HEK293 (cell line): ENCODE measurements at regions of chr19 and their contacts with region 1.

Region 1: DNA sequence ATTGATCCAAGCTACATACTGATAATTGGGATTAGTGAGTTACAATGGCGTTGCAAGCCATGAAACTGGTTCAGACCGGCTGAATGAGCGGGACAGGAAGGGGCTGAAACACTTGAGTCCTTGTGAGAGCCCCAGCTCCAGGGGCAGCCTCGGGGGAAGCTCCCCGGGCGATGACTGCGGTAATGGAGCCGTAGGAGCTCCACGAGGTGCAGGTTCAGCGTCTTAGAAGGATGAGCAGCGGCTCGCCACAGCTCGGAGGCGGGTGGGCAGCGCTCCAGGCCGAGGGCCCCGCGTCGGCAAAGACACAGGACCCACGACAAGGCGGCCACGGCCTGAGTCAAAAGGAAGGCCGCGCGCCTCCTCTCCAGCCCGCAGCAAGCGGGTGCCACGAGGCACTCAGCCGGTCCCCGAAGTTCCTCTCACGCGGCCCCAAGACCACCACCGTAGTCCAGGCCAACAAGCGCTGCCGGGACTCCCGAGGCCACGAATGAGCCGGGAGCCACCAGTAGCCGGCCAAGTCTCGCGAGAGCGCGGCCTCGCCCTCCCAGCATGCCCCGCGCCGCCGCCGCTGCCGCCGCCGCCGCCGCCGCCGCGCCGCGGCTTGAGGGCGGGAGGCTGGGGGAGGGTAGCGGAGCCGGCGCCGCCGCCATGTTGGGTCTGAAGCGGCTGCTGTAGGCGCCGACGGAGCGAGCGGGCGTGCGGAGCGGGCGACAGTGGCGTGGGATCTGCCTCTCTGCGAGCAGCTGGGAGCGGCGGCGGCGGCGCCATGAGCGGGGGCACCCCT is at the start of gene LSM14A:
- H3K4me3 ChIP-seq: peak within 1 kb of the TSS; percentile 85
- H3K27ac ChIP-seq: peak within 1 kb of the TSS; percentile 100
- H3K4me1 ChIP-seq: peaks cover 37% of the 10 kb centered on the region
- CTCF ChIP-seq: peak; percentile 20

Region 2: GRCh38 chr19:34134190-34135053 is 37.6 kb before region 1 on chr19:
- CTCF ChIA-PET with region 1: interaction called, 3 read pairs
- POLR2A ChIA-PET with region 1: interaction called, 21 read pairs
- H3K4me3 ChIP-seq: peak overlapping the region; percentile 53
- H3K27ac ChIP-seq: peak overlapping the region; percentile 99
- H3K4me1 ChIP-seq: peaks cover 11% of the 10 kb centered on the region
- CTCF ChIP-seq: peak; percentile 79; the same call in 1 of the 2 replicates

Region 3: GRCh38 chr19:34155686-34156085 is 16.4 kb before region 1 on chr19:
- CTCF ChIA-PET with region 1: interaction called, 4 read pairs
- POLR2A ChIA-PET with region 1: interaction called, 10 read pairs
- H3K4me3 ChIP-seq: no peak overlapping the region
- H3K27ac ChIP-seq: no peak overlapping the region
- H3K4me1 ChIP-seq: 0 out of 2 replicates have a peak, but pooled peaks cover 2% of the 10 kb centered on the region
- CTCF ChIP-seq: no peak

Region 4: GRCh38 chr19:34188408-34188807 is 16.3 kb after region 1 on chr19:
- CTCF ChIA-PET with region 1: interaction called, 10 read pairs
- POLR2A ChIA-PET with region 1: interaction called, 16 read pairs
- H3K4me3 ChIP-seq: no peak overlapping the region
- H3K27ac ChIP-seq: 0 out of 2 replicates have a peak overlapping the region, but pooled peaks have one; percentile 9
- H3K4me1 ChIP-seq: peaks cover 81% of the 10 kb centered on the region
- CTCF ChIP-seq: no peak